B cell (primary cell): ENCODE measurements at regions of chr22 and their contacts with region 1.

Region 1: DNA sequence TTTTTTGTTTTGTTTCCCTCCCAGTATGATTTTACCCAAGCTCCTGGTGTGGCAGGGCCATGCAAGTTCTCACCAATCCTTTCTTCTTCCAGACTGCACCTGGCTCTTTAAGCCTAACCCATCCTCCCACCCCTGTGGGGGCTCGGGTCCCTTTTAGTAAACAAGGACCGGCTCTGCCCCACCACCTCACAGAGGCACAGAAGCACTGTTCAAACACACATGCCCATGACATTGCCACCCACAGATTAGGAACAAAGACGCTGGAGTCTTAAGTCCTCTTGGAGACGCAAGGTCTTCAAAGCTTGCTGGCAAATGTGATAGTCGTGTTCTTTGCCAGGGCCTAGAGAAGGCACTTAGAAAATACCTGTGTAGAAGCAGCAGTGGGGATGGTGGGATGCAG is 18.9 kb downstream of the UQCR10 start:
- DNase-seq: no peak
- ATAC-seq: no peak
- H3K4me3 ChIP-seq: no peak overlapping the region
- H3K4me3 Mint-ChIP-seq: no peak overlapping the region
- H3K27ac ChIP-seq: no peak overlapping the region
- H3K27ac Mint-ChIP-seq: no peak overlapping the region
- H3K4me1 ChIP-seq: peaks cover 0 to 5% of the 10 kb centered on the region in 2 donors
- H3K4me1 Mint-ChIP-seq: peaks cover 5% of the 10 kb centered on the region
- H3K27me3 ChIP-seq: no peaks in the 10 kb centered on the region
- H3K27me3 Mint-ChIP-seq: no peaks in the 10 kb centered on the region
- CTCF ChIP-seq: no peak

Region 2: DNA sequence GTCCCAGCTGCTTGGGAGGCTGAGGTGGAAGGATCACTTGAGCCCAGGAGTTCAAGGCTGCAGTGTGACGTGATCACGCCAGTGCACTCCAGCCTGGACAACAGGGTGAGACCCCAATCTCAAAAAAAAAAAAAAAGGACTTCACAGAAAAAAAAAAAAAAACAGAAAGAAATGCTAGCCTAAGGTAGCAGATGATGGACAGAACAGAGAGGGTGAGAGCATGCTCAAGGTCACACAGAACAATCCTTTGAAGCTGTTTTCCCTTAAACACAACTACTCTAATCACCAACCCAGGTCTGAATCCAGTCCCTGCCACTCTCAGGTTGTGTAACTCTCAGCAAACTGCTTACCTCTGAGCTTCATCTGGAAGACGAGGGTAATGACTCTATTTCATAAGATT is 28.9 kb before region 1 on chr22:
- CTCF ChIA-PET with region 1: no interaction called
- POLR2A ChIA-PET with region 1: interaction called, 13 read pairs
- intact Hi-C with region 1: no loop called
- DNase-seq: no peak
- ATAC-seq: no peak
- H3K4me3 ChIP-seq: no peak overlapping the region
- H3K4me3 Mint-ChIP-seq: no peak overlapping the region
- H3K27ac ChIP-seq: no peak overlapping the region
- H3K27ac Mint-ChIP-seq: no peak overlapping the region
- H3K4me1 ChIP-seq: no peaks in the 10 kb centered on the region
- H3K4me1 Mint-ChIP-seq: peaks cover 6% of the 10 kb centered on the region
- H3K27me3 ChIP-seq: no peaks in the 10 kb centered on the region
- H3K27me3 Mint-ChIP-seq: no peaks in the 10 kb centered on the region
- CTCF ChIP-seq: no peak